Dendritic cell treated with granulocyte-macrophage colony-stimulating factor and Interleukin-4, amounts not matched to agents 40 ng/mL and 50 ng/mL, for 4 days (primary cell): ENCODE measurements at regions of chr4 and their contacts with region 1.

Region 1: DNA sequence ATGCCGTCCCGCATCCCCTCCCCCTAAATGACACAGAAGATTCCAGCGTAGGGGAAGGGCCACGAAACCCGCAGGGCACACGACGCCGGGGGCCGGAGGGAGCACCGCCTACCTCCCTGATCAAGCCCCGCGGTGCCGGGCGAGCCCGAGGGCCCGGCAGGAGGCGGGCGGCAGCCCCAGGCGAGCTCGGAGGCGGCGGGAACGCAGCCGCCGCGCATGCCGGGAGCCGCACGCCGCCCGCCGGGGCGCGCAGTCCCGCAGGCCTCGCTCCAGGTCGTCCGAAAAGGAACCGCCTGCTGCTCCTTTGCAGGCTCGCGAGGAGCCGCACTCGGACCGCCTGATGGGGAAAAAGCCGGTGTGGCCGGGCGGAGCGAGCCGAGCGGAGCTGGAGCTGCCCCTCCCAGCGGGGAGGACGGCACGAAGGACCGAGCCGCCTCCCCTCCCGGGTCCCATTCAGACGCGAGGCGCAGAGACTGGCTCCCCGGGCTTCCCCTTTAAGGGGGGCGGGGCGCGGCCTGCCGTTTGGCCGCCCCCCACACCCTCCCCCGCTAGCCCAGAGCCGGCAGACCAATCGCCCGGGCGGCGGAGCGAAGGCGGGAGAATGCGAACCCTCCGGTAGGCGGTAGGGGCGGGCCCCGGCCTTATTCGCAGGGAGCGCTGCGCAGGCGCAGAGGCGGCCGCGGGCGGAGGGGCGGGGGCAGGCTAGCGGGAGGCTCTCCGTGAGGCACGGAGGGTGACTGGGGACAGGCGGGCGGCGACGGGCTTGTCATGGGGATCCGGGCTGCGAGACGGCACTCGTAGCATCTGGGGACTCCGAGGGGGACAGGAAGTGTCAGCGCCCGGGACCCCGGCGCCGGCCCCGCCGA is 561 bp upstream of the ING2 start:
- H3K4me3 Mint-ChIP-seq: peak overlapping the region; percentile 86
- H3K27ac Mint-ChIP-seq: peak overlapping the region; percentile 99
- H3K4me1 Mint-ChIP-seq: peaks cover 25% of the 10 kb centered on the region
- H3K27me3 Mint-ChIP-seq: no peaks in the 10 kb centered on the region

Region 2: GRCh38 chr4:183635321-183635720 is 131.0 kb after region 1 on chr4:
- intact Hi-C with region 1: no loop called
- H3K4me3 Mint-ChIP-seq: no peak overlapping the region
- H3K27ac Mint-ChIP-seq: no peak overlapping the region
- H3K4me1 Mint-ChIP-seq: peaks cover 6% of the 10 kb centered on the region
- H3K27me3 Mint-ChIP-seq: no peaks in the 10 kb centered on the region

Region 3: DNA sequence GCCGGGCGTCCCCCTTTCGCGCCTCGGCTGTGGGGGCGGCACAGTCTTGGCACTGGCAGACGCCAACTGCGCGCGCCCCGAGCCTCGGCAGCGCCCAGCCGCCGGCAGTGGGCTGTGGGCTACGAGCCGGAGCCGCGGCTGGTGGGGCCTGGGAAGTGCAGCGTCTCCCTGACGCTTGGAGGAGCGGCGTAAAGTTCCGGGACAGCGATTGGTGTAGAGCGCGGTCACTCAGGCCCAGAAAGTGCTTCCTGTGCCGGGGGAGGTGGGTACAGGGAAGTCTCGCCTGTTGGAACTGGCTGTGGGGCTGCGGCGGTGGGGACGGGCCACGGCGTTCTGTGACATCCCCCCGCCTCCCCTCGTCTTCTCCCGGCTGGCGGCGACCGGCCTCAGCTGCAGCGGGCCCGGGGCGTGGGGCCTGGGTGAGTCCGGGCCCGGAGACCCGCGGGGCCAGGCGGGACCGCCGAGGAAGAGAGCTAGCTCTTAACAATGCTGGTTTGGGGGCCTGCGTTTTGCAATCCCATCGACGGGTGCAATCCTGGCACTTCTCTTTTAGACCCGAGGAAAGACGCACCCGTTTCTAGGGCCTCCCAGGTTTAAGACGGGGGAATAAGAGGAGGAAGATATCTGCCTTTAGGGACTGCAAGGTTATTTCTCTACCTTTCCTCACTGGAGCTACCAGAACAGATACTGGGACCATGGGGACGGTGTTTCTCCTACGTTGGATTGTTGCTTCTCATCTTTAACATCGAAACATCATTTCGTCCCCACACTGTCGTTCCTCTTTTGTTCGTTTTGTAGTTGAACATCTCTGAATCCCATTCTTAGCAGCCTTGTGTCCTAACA is 155.0 kb after region 1 on chr4 and contains the starts of genes RWDD4 and TRAPPC11:
- intact Hi-C with region 1: loop called (anchors 1 kb)
- H3K4me3 Mint-ChIP-seq: peak within 1 kb of the TSS; percentile 87
- H3K27ac Mint-ChIP-seq: peak within 1 kb of the TSS; percentile 91
- H3K4me1 Mint-ChIP-seq: peaks cover 33% of the 10 kb centered on the region
- H3K27me3 Mint-ChIP-seq: no peaks in the 10 kb centered on the region